ENCODE measurements at regions of chr7 and their contacts with region 1.

Region 1: GRCh38 chr7:136874238-136875032 is 6.0 kb downstream of the CHRM2 start:
- DNase-seq: no peak
- ATAC-seq: no peak

Region 2: GRCh38 chr7:137081321-137082093 is 207.1 kb after region 1 on chr7:
- intact Hi-C with region 1: loop called (anchors 10 kb)
- DNase-seq: peak; percentile 80
- ATAC-seq: peak; percentile 95

Measured in left ventricle myocardium superior (tissue), 1 donor.